ENCODE measurements at regions of chr22 and their contacts with region 1.

Region 1: GRCh38 chr22:20606041-20606783 is 98.8 kb downstream of the MED15 start:
- DNase-seq: peak; percentile 78
- H3K4me3 ChIP-seq: no peak overlapping the region
- H3K27ac ChIP-seq: no peak overlapping the region
- H3K4me1 ChIP-seq: no peaks in the 10 kb centered on the region
- CTCF ChIP-seq: peak; percentile 85

Region 2: GRCh38 chr22:20741634-20742581 is 135.7 kb after region 1 on chr22:
- CTCF ChIA-PET with region 1: no interaction called
- POLR2A ChIA-PET with region 1: no interaction called
- intact Hi-C with region 1: loop called (anchors 2 kb)
- DNase-seq: peak; percentile 59
- H3K4me3 ChIP-seq: no peak overlapping the region
- H3K27ac ChIP-seq: no peak overlapping the region
- H3K4me1 ChIP-seq: no peaks in the 10 kb centered on the region
- CTCF ChIP-seq: peak; percentile 94

Region 3: GRCh38 chr22:20783844-20784723 is 177.9 kb after region 1 on chr22:
- CTCF ChIA-PET with region 1: no interaction called
- POLR2A ChIA-PET with region 1: no interaction called
- intact Hi-C with region 1: loop called (anchors 10 kb)
- DNase-seq: peak; percentile 69
- H3K4me3 ChIP-seq: no peak overlapping the region
- H3K27ac ChIP-seq: no peak overlapping the region
- H3K4me1 ChIP-seq: peaks cover 7% of the 10 kb centered on the region
- CTCF ChIP-seq: peak; percentile 91

Measured in OCI-LY7 (cell line).